ENCODE measurements at regions of chr3 and their contacts with region 1.

Region 1: GRCh38 chr3:15859507-15860013 is 61.8 kb upstream of the ANKRD28 start:
- DNase-seq: peak; percentile 89 to 94
- ATAC-seq: peak; percentile 91 to 96 (median 94)
- H3K4me3 ChIP-seq: peak overlapping the region; percentile 98
- H3K27ac ChIP-seq: peak overlapping the region; percentile 91
- H3K4me1 ChIP-seq: peaks cover 30% of the 10 kb centered on the region
- H3K27me3 ChIP-seq: no peaks in the 10 kb centered on the region
- CTCF ChIP-seq: no peak

Region 2: DNA sequence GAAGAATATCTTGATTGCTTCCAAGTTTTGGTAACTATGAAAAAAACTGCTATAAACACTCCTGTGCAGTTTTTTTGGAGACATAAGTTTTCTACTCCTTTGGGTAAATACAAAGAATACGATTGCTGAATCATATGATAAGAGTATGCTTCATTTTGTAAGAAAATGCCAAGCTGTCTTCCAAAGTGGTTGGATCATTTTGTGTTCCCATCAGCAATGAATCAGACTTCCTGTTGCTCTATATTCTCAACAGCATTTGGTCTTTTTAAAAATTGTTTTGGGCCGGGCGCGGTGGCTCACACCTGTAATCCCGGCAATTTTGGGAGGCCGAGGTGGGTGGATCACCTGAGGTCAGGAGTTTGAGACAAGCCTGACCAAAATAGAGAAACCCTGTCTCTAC is 243.5 kb before region 1 on chr3:
- intact Hi-C with region 1: no loop called
- DNase-seq: no peak
- ATAC-seq: no peak
- H3K4me3 ChIP-seq: no peak overlapping the region
- H3K27ac ChIP-seq: no peak overlapping the region
- H3K4me1 ChIP-seq: peaks cover 8% of the 10 kb centered on the region
- H3K27me3 ChIP-seq: no peaks in the 10 kb centered on the region
- CTCF ChIP-seq: no peak

Region 3: GRCh38 chr3:15667484-15667883 is 192.1 kb before region 1 on chr3:
- intact Hi-C with region 1: no loop called
- DNase-seq: no peak
- ATAC-seq: no peak
- H3K4me3 ChIP-seq: no peak overlapping the region
- H3K27ac ChIP-seq: no peak overlapping the region
- H3K4me1 ChIP-seq: peaks cover 12% of the 10 kb centered on the region
- H3K27me3 ChIP-seq: no peaks in the 10 kb centered on the region
- CTCF ChIP-seq: no peak

Region 4: GRCh38 chr3:15820911-15821310 is 38.6 kb before region 1 on chr3:
- intact Hi-C with region 1: loop called in 1 of 2 experiments (anchors 5 kb)
- DNase-seq: no peak
- ATAC-seq: peak in 3 of 4 donors; percentile 42 to 60 (median 43)
- H3K4me3 ChIP-seq: no peak overlapping the region
- H3K27ac ChIP-seq: no peak overlapping the region
- H3K4me1 ChIP-seq: peaks cover 40% of the 10 kb centered on the region
- H3K27me3 ChIP-seq: no peaks in the 10 kb centered on the region
- CTCF ChIP-seq: no peak

Region 5: GRCh38 chr3:15903164-15903563 is 43.6 kb after region 1 on chr3:
- intact Hi-C with region 1: loop called (anchors 5 to 10 kb)
- DNase-seq: peak; percentile 25 to 73
- ATAC-seq: peak; percentile 81 to 90 (median 86)
- H3K4me3 ChIP-seq: no peak overlapping the region
- H3K27ac ChIP-seq: peak overlapping the region; percentile 86
- H3K4me1 ChIP-seq: peaks cover 34% of the 10 kb centered on the region
- H3K27me3 ChIP-seq: no peaks in the 10 kb centered on the region
- CTCF ChIP-seq: no peak

Region 6: GRCh38 chr3:15964605-15965442 is 105.3 kb after region 1 on chr3:
- intact Hi-C with region 1: loop called in 1 of 2 experiments (anchors 5 kb)
- DNase-seq: peak; percentile 68 to 83
- ATAC-seq: peak; percentile 98 to 100 (median 99)
- H3K4me3 ChIP-seq: peak overlapping the region; percentile 69
- H3K27ac ChIP-seq: peak overlapping the region; percentile 96
- H3K4me1 ChIP-seq: peaks cover 22% of the 10 kb centered on the region
- H3K27me3 ChIP-seq: no peaks in the 10 kb centered on the region
- CTCF ChIP-seq: no peak

Region 7: GRCh38 chr3:16448639-16449070 is 589.1 kb after region 1 on chr3:
- intact Hi-C with region 1: no loop called
- DNase-seq: peak; percentile 78 to 88
- ATAC-seq: peak; percentile 93 to 99 (median 98)
- H3K4me3 ChIP-seq: no peak overlapping the region
- H3K27ac ChIP-seq: peak overlapping the region; percentile 50
- H3K4me1 ChIP-seq: peaks cover 20% of the 10 kb centered on the region
- H3K27me3 ChIP-seq: no peaks in the 10 kb centered on the region
- CTCF ChIP-seq: no peak

Measured in psoas muscle (tissue), 8 donors.